GM12878 (cell line): ENCODE measurements at regions of chr15 and their contacts with region 1.

Region 1: GRCh38 chr15:84929744-84930371 is 45.4 kb downstream of the SLC28A1 start:
- DNase-seq: no peak
- ATAC-seq: no peak
- H3K4me3 ChIP-seq: no peak overlapping the region
- H3K27ac ChIP-seq: no peak overlapping the region
- H3K4me1 ChIP-seq: no peaks in the 10 kb centered on the region
- H3K27me3 ChIP-seq: no peaks in the 10 kb centered on the region
- CTCF ChIP-seq: no peak
- EP300 ChIP-seq: no peak
- POLR2A ChIP-seq: no peak
- RAD21 ChIP-seq: no peak

Region 2: GRCh38 chr15:84588053-84588874 is 341.6 kb before region 1 on chr15:
- CTCF ChIA-PET with region 1: interaction called, 26 read pairs
- POLR2A ChIA-PET with region 1: no interaction called
- RAD21 ChIA-PET with region 1: interaction called, 8 read pairs
- SMC1A ChIA-PET with region 1: interaction called, 10 read pairs
- in situ Hi-C with region 1: loop called (anchors 5 kb)
- intact Hi-C with region 1: loop called (anchors 1 kb)
- DNase-seq: no peak
- ATAC-seq: peak; percentile 100
- H3K4me3 ChIP-seq: no peak overlapping the region; the same call in 1 of the 2 replicates
- H3K27ac ChIP-seq: no peak overlapping the region
- H3K4me1 ChIP-seq: no peaks in the 10 kb centered on the region
- H3K27me3 ChIP-seq: no peaks in the 10 kb centered on the region; a peak in 2 of 4 replicates
- CTCF ChIP-seq: peak; percentile 43 to 88 (median 72)
- EP300 ChIP-seq: no peak
- POLR2A ChIP-seq: no peak
- RAD21 ChIP-seq: peak; percentile 80

Region 3: DNA sequence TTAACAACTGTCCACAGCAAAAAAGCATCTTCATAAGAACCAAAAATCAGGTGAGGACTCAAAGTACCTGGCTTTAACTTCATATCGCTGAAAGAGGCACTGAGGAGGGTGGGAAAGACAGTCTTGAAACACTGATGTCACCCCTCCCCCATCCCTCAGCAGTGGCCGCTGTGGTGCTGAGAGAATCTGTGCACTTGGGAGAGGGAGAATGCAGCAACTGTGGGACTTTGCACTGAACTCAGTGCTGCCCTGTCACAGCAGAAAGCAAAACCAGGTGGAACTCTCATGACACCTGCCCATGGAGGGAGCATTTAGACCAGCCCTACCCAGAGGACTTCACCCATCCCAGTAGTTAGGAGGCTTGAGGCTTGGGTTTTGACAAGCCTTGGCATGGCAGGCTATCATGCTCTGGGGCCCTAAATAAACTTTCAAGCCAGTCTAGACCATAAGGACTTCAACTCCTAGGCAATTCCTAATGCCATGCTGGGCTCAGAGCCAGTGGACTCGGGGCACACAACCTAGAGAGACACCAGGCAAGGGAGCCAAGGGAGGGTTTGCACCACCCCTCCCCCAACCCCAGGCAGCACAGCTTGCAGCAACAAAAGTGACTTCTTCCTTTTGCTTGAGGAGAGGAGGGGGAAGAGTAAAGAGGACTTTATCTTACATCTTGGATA is 335.1 kb before region 1 on chr15:
- CTCF ChIA-PET with region 1: interaction called, 14 read pairs
- POLR2A ChIA-PET with region 1: no interaction called
- RAD21 ChIA-PET with region 1: interaction called, 15 read pairs
- SMC1A ChIA-PET with region 1: interaction called, 7 read pairs
- in situ Hi-C with region 1: loop called (anchors 5 kb)
- intact Hi-C with region 1: no loop called
- DNase-seq: no peak
- ATAC-seq: no peak
- H3K4me3 ChIP-seq: no peak overlapping the region
- H3K27ac ChIP-seq: no peak overlapping the region
- H3K4me1 ChIP-seq: peaks cover 15% of the 10 kb centered on the region
- H3K27me3 ChIP-seq: peaks cover 2% of the 10 kb centered on the region in 2 experiments; a peak in 2 of 4 replicates
- CTCF ChIP-seq: no peak
- EP300 ChIP-seq: no peak
- POLR2A ChIP-seq: no peak
- RAD21 ChIP-seq: no peak

Region 4: GRCh38 chr15:84658080-84658787 is 271.6 kb before region 1 on chr15 and contains the start of gene NMB:
- CTCF ChIA-PET with region 1: interaction called, 7 read pairs
- POLR2A ChIA-PET with region 1: interaction called, 3 read pairs
- RAD21 ChIA-PET with region 1: interaction called, 6 read pairs
- SMC1A ChIA-PET with region 1: interaction called, 3 read pairs
- in situ Hi-C with region 1: no loop called
- intact Hi-C with region 1: loop called (anchors 1 kb)
- DNase-seq: peak; percentile 33
- ATAC-seq: peak; percentile 81
- H3K4me3 ChIP-seq: peak within 1 kb of the TSS; percentile 49; the same call in 1 of the 2 replicates
- H3K27ac ChIP-seq: no peak within 1 kb of the TSS
- H3K4me1 ChIP-seq: peaks cover 19% of the 10 kb centered on the region
- H3K27me3 ChIP-seq: no peaks in the 10 kb centered on the region
- CTCF ChIP-seq: peak; percentile 56 to 66 (median 61)
- EP300 ChIP-seq: no peak
- POLR2A ChIP-seq: no peak
- RAD21 ChIP-seq: peak; percentile 29; the same call in 1 of the 2 replicates
- polyA plus RNA-seq, gene NMB: 0.32 to 0.91 TPM

Region 5: GRCh38 chr15:84725001-84725491 is 204.8 kb before region 1 on chr15:
- CTCF ChIA-PET with region 1: no interaction called
- POLR2A ChIA-PET with region 1: no interaction called
- RAD21 ChIA-PET with region 1: no interaction called
- SMC1A ChIA-PET with region 1: no interaction called
- in situ Hi-C with region 1: no loop called
- intact Hi-C with region 1: loop called (anchors 1 kb)
- DNase-seq: peak; percentile 71
- ATAC-seq: peak; percentile 95
- H3K4me3 ChIP-seq: no peak overlapping the region
- H3K27ac ChIP-seq: peak overlapping the region; percentile 48
- H3K4me1 ChIP-seq: peaks cover 8% of the 10 kb centered on the region
- H3K27me3 ChIP-seq: no peaks in the 10 kb centered on the region
- CTCF ChIP-seq: no peak
- EP300 ChIP-seq: no peak
- POLR2A ChIP-seq: no peak
- RAD21 ChIP-seq: no peak

Region 6: DNA sequence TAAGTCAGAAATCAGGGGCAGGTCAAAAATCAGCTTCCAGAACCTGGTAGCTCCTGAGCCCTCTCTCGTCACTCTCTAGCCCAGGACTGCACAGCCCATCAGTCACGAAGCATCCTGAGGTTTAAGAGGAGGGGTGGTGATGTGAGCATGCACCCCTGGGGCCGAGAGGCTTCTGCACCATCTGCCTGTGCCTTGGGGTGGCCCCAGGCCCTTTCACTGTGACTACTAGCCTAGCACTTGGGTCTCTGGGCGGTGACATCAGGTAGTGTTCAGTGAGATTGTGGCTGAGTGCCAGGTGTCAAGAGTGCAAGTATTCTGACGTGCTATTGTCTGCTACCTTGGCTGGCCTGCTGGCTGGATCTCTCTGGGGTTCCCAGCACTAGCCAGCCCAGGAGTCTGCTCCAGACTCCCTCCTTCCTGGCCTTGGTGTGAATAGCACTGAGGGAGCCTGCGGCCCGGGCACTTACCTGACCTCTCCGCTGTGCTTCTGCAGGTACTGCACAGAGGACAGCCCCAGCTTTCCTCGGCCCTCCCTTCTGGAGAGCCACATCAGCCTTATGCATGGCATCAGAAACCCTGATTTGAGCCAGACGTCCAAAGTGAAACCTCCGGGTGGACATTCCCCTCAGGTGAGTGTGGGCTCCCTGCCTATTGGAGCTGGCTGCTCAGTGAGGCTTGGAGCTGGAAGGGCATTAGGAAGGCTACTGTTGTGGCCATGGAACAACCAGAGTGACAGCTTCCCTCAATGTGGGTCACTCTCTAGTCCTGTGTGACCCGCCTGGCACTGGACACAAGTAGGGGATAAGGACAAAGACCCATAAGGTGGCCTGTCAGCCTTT is 130.3 kb before region 1 on chr15:
- CTCF ChIA-PET with region 1: no interaction called
- POLR2A ChIA-PET with region 1: no interaction called
- RAD21 ChIA-PET with region 1: no interaction called
- SMC1A ChIA-PET with region 1: no interaction called
- in situ Hi-C with region 1: no loop called
- intact Hi-C with region 1: no loop called
- DNase-seq: no peak
- ATAC-seq: no peak
- H3K4me3 ChIP-seq: no peak overlapping the region
- H3K27ac ChIP-seq: no peak overlapping the region
- H3K4me1 ChIP-seq: no peaks in the 10 kb centered on the region
- H3K27me3 ChIP-seq: no peaks in the 10 kb centered on the region
- CTCF ChIP-seq: no peak
- EP300 ChIP-seq: no peak
- POLR2A ChIP-seq: no peak
- RAD21 ChIP-seq: no peak

Region 7: GRCh38 chr15:84826369-84826823 is 103.5 kb before region 1 on chr15:
- CTCF ChIA-PET with region 1: interaction called, 5 read pairs
- POLR2A ChIA-PET with region 1: no interaction called
- RAD21 ChIA-PET with region 1: interaction called, 5 read pairs
- SMC1A ChIA-PET with region 1: interaction called, 5 read pairs
- in situ Hi-C with region 1: no loop called
- intact Hi-C with region 1: loop called (anchors 1 kb)
- DNase-seq: no peak
- ATAC-seq: peak; percentile 88
- H3K4me3 ChIP-seq: no peak overlapping the region
- H3K27ac ChIP-seq: no peak overlapping the region
- H3K4me1 ChIP-seq: no peaks in the 10 kb centered on the region
- H3K27me3 ChIP-seq: peaks cover 0 to 4% of the 10 kb centered on the region in 2 experiments; a peak in 3 of 4 replicates
- CTCF ChIP-seq: peak; percentile 43 to 52 (median 47); a peak in 4 of 6 replicates
- EP300 ChIP-seq: no peak
- POLR2A ChIP-seq: no peak
- RAD21 ChIP-seq: peak; percentile 51

Region 8: DNA sequence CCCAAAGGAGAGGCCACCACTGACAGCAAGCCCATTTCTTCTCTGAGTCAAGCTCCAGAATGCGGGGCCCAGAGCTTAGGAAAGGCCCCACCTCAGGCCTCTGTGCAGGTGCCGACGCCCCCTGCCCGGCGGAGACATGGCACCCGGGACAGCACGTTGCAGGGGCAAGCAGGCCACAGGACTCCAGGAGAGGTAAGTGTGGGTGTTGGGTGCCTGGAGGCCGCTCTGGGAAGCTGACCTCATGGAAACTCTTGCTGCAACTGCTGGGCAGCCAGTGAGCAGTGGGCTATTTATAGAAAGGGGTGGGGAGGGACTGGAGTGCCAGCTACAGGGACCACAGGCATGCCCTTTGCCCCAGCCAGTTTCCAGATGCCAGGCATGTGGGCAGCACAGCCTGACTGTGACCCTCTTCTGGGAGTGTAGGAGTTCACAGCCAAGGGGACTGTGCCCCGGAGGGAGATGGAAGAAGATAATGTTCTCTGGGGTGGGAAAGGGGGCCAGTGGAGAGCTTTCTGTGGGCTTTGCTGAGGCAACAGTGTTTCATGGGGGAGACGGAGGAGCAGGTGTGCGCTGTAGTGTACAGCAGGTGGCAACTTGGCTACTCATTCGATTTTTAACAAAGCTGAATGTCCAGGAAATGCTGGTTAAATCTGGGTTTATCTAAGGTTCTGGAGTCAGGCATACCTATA is 89.0 kb before region 1 on chr15:
- CTCF ChIA-PET with region 1: interaction called, 26 read pairs
- POLR2A ChIA-PET with region 1: no interaction called
- RAD21 ChIA-PET with region 1: interaction called, 3 read pairs
- SMC1A ChIA-PET with region 1: interaction called, 4 read pairs
- in situ Hi-C with region 1: no loop called
- intact Hi-C with region 1: loop called (anchors 5 kb)
- DNase-seq: no peak
- ATAC-seq: no peak
- H3K4me3 ChIP-seq: no peak overlapping the region
- H3K27ac ChIP-seq: no peak overlapping the region
- H3K4me1 ChIP-seq: no peaks in the 10 kb centered on the region
- H3K27me3 ChIP-seq: peaks cover 0 to 5% of the 10 kb centered on the region in 2 experiments; a peak in 2 of 4 replicates
- CTCF ChIP-seq: no peak
- EP300 ChIP-seq: no peak
- POLR2A ChIP-seq: no peak
- RAD21 ChIP-seq: no peak